BJ (cell line): ENCODE measurements at regions of chr5 and their contacts with region 1.

Region 1: GRCh38 chr5:68454766-68455165 is 239.2 kb downstream of the PIK3R1 start:
- DNase-seq: no peak
- H3K4me3 ChIP-seq: no peak overlapping the region
- H3K27me3 ChIP-seq: no peaks in the 10 kb centered on the region
- CTCF ChIP-seq: no peak

Region 2: DNA sequence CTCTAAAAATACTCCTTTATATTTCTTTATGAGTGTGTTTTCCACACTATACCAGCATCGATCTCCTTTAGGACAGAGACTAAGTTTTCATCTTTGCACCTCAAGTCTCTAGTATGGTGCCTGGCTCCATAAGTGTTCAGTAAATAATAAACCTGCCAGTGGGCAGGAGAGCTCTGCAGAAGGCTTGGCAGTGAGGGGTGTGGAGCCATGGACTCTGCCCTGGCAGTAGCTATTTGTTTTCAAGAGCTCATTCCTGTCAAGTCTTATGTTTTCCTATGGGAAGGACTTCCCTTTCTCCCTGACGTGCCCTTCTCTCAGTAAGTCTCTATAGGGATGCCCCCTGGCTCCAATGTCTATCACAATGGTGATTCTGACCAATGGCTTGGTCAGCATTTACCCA is 13.0 kb after region 1 on chr5:
- CTCF ChIA-PET with region 1: no interaction called
- POLR2A ChIA-PET with region 1: no interaction called
- DNase-seq: no peak
- H3K4me3 ChIP-seq: no peak overlapping the region
- H3K27me3 ChIP-seq: no peaks in the 10 kb centered on the region
- CTCF ChIP-seq: no peak

Region 3: DNA sequence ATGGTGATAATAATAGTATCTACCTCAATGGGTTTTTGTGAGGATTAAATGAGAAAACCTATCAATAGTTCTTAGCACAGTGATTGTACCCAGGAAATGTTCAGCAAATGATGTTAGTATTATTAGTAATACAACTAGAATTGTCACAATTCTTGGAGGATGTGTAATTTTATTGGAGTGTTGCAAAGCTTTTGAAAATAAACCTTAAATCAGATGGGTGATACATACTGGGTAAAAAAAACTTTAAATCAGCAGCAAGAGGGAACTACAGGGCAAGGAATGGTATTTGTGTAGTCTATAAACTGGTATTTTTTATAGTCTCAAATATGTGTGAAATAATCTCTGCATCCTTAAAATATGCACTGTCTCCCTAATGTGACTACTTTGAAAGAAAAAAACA is 132.4 kb after region 1 on chr5:
- CTCF ChIA-PET with region 1: no interaction called
- POLR2A ChIA-PET with region 1: interaction called, 13 read pairs
- DNase-seq: peak; percentile 68
- H3K4me3 ChIP-seq: no peak overlapping the region
- H3K27me3 ChIP-seq: no peaks in the 10 kb centered on the region
- CTCF ChIP-seq: no peak